HEK293T (cell line): ENCODE measurements at regions of chr1 and their contacts with region 1.

Region 1: GRCh38 chr1:91404151-91405012 is at the start of gene HFM1:
- DNase-seq: peak; percentile 88

Region 2: DNA sequence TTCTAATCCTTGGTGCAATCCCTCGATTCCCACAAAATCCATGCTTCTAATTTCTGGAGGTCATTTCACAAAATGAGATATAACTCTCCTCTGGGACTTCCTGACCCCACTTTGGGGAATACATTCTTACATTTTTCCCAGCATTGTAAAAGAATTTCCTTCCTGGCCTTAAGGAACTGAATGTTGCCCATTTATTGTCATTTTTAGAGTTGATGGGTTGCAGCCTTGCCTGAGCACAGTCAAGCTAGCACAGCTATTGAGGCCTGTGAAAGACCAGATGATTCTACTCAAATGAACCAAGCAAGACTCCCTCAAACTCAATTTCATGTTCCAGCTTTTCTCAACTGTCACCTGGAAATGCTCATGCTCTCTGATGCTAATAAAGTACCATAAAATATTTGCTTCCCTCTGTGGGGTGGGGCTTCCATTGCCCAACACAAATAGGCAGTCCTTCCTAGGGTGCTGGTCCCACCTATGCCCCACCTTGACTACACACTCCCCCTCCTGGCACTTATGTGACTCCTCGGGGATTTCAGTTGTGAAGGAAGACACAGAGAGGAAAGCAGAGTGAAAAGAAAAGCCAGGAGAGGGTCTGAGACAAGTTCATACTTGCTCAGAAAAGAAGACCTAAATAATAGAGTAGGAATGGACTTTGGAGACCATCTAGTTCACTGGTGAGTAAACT is 72.3 kb after region 1 on chr1:
- CTCF ChIA-PET with region 1: no interaction called
- POLR2A ChIA-PET with region 1: no interaction called
- DNase-seq: no peak

Region 3: DNA sequence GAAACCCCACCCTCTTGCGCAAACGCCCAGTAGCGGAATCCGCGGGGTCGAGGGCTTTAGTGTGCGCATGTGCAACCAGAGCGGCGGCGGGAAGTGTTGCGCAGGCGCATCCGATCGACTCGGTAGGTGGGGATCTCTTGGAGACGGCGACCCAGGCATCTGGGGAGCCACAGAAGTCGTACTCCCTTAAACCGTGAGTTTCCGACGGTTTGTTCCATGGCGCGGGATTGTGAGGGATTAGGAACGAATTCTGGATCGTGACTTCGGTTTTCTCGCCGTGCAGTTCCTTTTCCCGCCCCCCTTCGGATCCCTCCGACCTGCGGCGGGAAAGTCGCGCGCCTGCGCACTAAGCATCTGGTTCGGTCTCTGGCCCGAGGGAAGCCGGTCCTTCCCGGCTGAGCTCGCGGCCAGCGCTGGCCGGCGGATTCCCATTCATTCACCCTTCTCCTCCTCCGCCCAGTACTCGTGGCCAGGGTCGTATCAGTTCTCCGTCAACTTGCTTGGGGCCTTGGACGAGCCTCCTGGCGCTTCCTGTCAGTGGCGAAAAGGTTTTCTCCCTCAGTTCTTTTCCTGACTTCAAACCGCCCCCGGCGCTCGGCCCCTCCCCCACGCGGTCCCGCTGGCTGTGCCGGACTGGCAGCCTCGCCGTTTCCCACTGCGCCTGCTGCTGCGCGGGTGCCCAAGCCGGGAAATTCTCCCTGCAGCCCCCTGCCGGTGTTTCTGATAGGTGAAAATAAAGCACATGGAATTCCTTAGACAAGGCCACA is 96.6 kb after region 1 on chr1 and contains the start of gene CDC7:
- CTCF ChIA-PET with region 1: interaction called, 3 read pairs
- POLR2A ChIA-PET with region 1: interaction called, 33 read pairs
- DNase-seq: peak; percentile 96